Sigmoid colon (tissue), 7 donors: ENCODE measurements at regions of chr6 and their contacts with region 1.

Region 1: DNA sequence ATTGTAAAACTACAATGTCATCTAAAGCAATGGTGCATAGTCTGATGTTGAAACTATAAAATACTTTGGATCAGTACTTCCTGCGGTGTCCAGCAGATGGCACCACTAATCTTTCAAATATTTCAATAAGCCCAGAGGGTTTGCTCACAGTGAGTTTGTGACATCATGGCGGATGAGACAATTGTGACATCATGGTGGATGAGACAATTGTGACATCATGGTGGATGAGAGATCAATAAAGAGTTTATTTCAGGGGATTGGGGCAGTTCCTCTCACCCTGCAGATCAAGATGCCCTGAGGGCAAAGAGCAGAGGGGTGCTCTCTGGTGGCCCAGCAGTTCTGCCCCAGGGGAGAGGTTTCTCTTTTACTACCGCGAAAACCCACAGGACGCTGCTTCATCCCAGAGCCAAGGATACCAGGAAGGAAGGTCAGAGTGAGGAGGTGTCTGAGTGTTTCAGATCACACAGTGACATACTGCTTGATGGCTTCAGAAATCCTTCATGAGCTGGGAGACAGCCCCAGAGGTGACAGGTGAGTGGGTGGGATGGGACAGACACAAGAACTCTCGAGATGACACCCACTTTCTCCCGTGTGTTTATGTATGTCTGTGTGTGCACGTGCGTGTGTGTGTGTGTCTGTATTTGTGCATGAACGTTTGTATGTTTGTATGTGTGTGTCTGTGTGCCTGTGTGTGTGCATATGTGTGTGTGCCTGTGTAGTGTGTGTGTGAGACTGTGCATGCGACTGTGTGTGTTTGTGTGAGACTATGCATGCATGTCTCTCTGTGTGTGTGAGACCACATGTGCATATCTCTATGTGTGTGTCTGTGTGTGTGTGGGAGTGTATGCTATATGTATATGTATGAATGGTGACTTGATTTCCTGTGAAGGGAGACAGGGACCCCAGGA is 7.3 kb upstream of the ULBP2 start:
- DNase-seq: no peak
- H3K4me3 ChIP-seq: no peak overlapping the region
- H3K27ac ChIP-seq: no peak overlapping the region
- H3K4me1 ChIP-seq: peaks cover 0 to 15% (median 12%) of the 10 kb centered on the region in 4 donors
- H3K27me3 ChIP-seq: peaks cover 26 to 98% (median 75%) of the 10 kb centered on the region in 3 donors
- CTCF ChIP-seq: peak; percentile 53 to 82 (median 77)
- EP300 ChIP-seq: no peak
- POLR2A ChIP-seq: no peak

Region 2: DNA sequence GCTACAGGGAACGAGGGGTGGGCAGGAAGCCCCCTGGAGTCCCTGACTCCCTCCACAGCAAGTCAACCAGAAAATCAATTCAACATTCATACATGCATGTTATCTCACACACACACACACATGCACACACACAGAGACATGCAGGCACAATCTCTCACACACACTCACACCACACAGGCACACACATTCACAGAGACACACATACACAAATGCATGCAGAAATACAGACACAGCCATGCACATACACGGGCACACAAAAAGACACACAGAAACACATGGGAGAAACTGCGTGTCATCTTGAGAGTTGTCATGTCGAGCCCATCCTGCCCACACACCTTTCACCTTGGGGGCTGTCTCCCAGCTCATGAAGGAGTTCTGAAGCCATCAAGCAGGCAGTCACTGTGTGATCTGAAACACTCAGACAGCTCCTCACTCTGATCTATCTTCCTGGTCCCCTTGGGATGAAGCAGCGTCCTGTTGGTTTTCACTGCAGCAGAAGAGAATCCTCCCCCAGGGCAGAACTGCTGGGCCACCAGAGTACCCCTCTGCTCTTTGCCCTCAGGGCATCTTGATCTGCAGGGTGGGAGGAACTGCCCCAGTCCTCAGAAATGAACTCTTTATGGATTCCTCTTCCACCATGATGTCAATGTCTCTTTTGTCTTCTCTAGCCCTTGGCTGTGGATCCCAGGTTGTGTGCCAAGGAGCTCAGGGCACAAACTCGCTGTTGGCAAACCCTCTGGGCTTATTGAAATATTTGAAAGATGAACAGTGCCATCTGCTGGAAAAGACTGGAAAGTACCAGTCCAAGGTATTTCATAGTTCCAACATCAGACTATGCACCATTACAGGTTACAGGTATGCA is 82.1 kb after region 1 on chr6:
- intact Hi-C with region 1: loop called (anchors 1 kb)
- DNase-seq: no peak
- H3K4me3 ChIP-seq: no peak overlapping the region
- H3K27ac ChIP-seq: no peak overlapping the region
- H3K4me1 ChIP-seq: peaks cover 0 to 12% (median 0%) of the 10 kb centered on the region in 4 donors
- H3K27me3 ChIP-seq: peaks cover 27 to 73% (median 47%) of the 10 kb centered on the region in 3 donors
- CTCF ChIP-seq: peak; percentile 56 to 76 (median 68)
- EP300 ChIP-seq: no peak
- POLR2A ChIP-seq: no peak

Region 3: DNA sequence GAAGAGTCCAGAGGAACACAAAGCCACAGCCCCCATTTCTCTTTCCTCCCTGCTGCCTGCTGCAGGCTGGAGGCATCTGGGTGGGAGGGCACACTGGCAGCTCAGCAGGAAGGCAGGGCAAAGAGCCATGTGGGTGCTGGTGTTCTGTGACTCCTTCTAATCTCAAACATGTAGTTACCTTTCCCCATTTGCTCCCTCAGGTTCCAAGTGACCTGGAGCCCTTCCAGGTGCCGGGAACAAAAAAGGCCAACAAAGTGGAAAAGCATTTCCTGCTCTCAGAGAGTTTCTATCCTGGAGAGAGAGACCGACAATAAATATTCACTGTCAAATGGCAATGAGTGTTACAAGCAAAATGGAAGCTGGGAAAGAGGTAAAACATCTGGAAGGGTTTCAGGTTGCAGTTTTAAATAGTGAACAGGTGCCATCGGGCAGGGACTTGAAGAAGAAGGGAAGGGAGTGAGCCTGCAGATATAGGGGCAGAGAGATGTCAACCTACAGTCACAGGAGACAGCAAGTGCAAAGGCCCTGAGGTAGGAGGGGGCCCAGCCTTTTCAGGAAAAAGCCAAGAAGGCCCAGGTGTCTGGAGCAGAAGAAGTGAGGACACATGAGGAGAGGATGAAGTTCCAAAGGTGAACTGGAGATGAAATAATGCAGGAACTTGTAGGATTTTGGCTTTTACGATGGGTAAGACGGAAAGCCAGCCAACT is 390.7 kb after region 1 on chr6:
- intact Hi-C with region 1: no loop called
- DNase-seq: no peak
- H3K4me3 ChIP-seq: no peak overlapping the region
- H3K27ac ChIP-seq: no peak overlapping the region
- H3K4me1 ChIP-seq: no peaks in the 10 kb centered on the region
- H3K27me3 ChIP-seq: no peaks in the 10 kb centered on the region
- CTCF ChIP-seq: no peak
- EP300 ChIP-seq: no peak
- POLR2A ChIP-seq: no peak